ENCODE measurements at regions of chr3 and their contacts with region 1.

Region 1: DNA sequence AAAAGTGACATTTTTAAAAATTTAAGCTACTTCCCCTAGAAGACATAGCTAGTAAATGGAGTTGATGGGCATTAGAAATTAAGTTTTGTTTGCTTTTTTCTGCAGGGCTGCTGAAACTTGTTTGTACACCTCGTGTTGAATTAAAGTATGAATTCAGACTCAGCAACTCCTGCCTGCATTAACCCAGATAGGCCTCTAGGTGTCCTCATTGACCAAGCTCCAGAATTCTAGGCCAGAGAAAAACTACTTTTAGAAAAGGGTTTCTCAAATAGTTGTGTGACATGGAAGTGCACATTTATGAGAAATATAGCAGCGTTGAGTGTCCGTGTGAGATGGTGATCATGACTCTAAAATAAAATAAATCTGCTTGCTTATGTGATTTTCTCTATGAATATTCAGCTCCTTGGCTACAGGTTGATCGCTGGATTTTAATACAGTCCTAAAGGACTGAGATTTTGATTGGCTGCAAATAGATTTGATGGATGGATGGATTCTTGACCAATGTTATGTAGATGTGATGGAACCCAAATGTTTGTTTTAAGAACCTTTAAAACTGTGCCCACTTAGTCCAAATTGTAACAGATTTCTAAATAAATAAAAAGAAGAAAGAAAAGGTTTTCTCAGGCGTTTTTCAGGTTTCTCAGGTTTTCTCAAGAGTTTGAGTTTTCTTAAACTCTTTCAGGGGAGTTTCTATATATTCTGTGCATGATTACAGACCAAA is 39.4 kb upstream of the LMOD3 start:
- DNase-seq: peak; percentile 41
- ATAC-seq: peak; percentile 83
- H3K4me3 Mint-ChIP-seq: no peak overlapping the region
- H3K27ac Mint-ChIP-seq: no peak overlapping the region
- H3K4me1 Mint-ChIP-seq: peaks cover 18% of the 10 kb centered on the region
- H3K27me3 Mint-ChIP-seq: no peaks in the 10 kb centered on the region
- CTCF ChIP-seq: peak; percentile 94

Region 2: DNA sequence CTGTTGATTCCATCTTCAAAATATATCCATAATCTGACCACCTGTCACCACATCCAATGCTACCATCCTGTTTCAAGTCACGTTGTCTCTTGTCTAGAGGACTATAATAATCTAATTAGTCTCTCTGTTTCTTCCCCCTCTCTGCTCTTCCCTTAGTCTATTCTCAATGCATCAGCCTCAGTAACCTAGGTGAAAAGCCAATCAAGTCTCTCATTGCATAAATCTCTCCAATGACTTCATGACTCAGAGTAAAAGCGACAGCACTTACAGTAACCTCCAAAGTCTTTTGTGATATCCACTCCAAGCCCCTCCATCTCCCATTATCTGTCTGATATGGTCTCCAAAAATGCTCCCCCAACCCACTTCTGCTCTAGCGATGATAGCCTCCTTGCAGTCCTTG is 88.8 kb before region 1 on chr3:
- CTCF ChIA-PET with region 1: no interaction called
- POLR2A ChIA-PET with region 1: no interaction called
- intact Hi-C with region 1: no loop called
- DNase-seq: no peak
- ATAC-seq: peak; percentile 69
- H3K4me3 Mint-ChIP-seq: no peak overlapping the region
- H3K27ac Mint-ChIP-seq: peak overlapping the region; percentile 21
- H3K4me1 Mint-ChIP-seq: peaks cover 34% of the 10 kb centered on the region
- H3K27me3 Mint-ChIP-seq: no peaks in the 10 kb centered on the region
- CTCF ChIP-seq: no peak

Region 3: GRCh38 chr3:69120879-69121464 is 40.8 kb before region 1 on chr3:
- CTCF ChIA-PET with region 1: interaction called, 34 read pairs
- POLR2A ChIA-PET with region 1: no interaction called
- intact Hi-C with region 1: loop called (anchors 5 kb)
- DNase-seq: peak; percentile 93
- ATAC-seq: peak; percentile 96
- H3K4me3 Mint-ChIP-seq: no peak overlapping the region
- H3K27ac Mint-ChIP-seq: no peak overlapping the region
- H3K4me1 Mint-ChIP-seq: peaks cover 5% of the 10 kb centered on the region
- H3K27me3 Mint-ChIP-seq: no peaks in the 10 kb centered on the region
- CTCF ChIP-seq: peak; percentile 96

Region 4: GRCh38 chr3:69174871-69175737 is 13.4 kb after region 1 on chr3:
- CTCF ChIA-PET with region 1: interaction called, 29 read pairs
- POLR2A ChIA-PET with region 1: no interaction called
- intact Hi-C with region 1: no loop called
- DNase-seq: no peak
- ATAC-seq: no peak
- H3K4me3 Mint-ChIP-seq: no peak overlapping the region
- H3K27ac Mint-ChIP-seq: no peak overlapping the region
- H3K4me1 Mint-ChIP-seq: peaks cover 11% of the 10 kb centered on the region
- H3K27me3 Mint-ChIP-seq: no peaks in the 10 kb centered on the region
- CTCF ChIP-seq: no peak

Region 5: GRCh38 chr3:69200384-69201068 is 38.8 kb after region 1 on chr3:
- CTCF ChIA-PET with region 1: interaction called, 24 read pairs
- POLR2A ChIA-PET with region 1: no interaction called
- intact Hi-C with region 1: loop called (anchors 5 kb)
- DNase-seq: peak; percentile 78
- ATAC-seq: peak; percentile 33
- H3K4me3 Mint-ChIP-seq: peak overlapping the region; percentile 74
- H3K27ac Mint-ChIP-seq: peak overlapping the region; percentile 89
- H3K4me1 Mint-ChIP-seq: peaks cover 78% of the 10 kb centered on the region
- H3K27me3 Mint-ChIP-seq: no peaks in the 10 kb centered on the region
- CTCF ChIP-seq: no peak

Region 6: DNA sequence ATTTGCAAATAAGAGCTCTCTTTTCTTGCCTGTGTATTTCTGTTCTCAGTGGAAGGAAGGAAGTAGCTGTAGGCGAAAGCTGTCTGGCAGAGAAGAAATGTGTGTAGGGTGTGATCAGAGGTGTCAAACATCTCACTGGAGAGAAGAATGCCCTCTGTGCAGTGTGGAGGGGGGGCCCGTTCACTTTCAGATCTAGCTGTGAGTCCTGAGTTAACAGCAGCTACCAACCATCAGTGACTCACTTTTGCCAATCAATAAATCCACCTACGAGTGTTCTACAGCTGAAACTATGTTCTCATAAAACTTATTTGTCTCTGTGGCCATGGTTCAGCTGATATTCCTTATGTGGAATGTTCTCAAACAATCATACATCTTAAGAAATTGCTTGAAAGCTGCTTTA is 120.4 kb after region 1 on chr3:
- CTCF ChIA-PET with region 1: interaction called, 35 read pairs
- POLR2A ChIA-PET with region 1: interaction called, 4 read pairs
- intact Hi-C with region 1: no loop called
- DNase-seq: peak; percentile 92
- ATAC-seq: peak; percentile 100
- H3K4me3 Mint-ChIP-seq: no peak overlapping the region
- H3K27ac Mint-ChIP-seq: peak overlapping the region; percentile 75
- H3K4me1 Mint-ChIP-seq: peaks cover 28% of the 10 kb centered on the region
- H3K27me3 Mint-ChIP-seq: no peaks in the 10 kb centered on the region
- CTCF ChIP-seq: no peak

Region 7: GRCh38 chr3:69306239-69307185 is 144.8 kb after region 1 on chr3:
- CTCF ChIA-PET with region 1: interaction called, 404 read pairs
- POLR2A ChIA-PET with region 1: interaction called, 6 read pairs
- intact Hi-C with region 1: loop called (anchors 1 kb)
- DNase-seq: peak; percentile 75
- ATAC-seq: peak; percentile 94
- H3K4me3 Mint-ChIP-seq: no peak overlapping the region
- H3K27ac Mint-ChIP-seq: peak overlapping the region; percentile 16
- H3K4me1 Mint-ChIP-seq: peaks cover 20% of the 10 kb centered on the region
- H3K27me3 Mint-ChIP-seq: no peaks in the 10 kb centered on the region
- CTCF ChIP-seq: peak; percentile 82

Region 8: DNA sequence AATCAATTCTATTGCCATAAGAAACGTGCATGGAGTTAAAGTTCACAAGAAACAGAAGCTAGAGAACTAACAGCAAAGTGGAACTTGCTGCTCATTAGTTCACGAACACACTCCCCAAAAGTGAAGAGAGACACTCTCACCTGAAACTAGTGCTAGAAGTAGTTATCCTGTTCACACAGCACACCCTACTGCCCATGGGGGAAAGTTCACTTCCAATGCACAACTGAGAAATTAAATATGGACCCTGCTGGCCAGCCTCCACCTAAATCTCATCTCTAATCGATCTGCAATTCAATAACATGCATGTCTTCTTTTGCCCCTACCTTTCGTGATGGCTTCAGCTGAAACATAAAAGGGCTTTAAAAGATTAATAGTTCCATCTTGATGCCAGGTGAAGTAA is 263.5 kb after region 1 on chr3:
- CTCF ChIA-PET with region 1: interaction called, 60 read pairs
- POLR2A ChIA-PET with region 1: no interaction called
- intact Hi-C with region 1: loop called (anchors 5 kb)
- DNase-seq: peak; percentile 54
- ATAC-seq: peak; percentile 65
- H3K4me3 Mint-ChIP-seq: no peak overlapping the region
- H3K27ac Mint-ChIP-seq: no peak overlapping the region
- H3K4me1 Mint-ChIP-seq: peaks cover 2% of the 10 kb centered on the region
- H3K27me3 Mint-ChIP-seq: peaks cover 2% of the 10 kb centered on the region
- CTCF ChIP-seq: peak; percentile 24